Naive thymus-derived CD8-positive, alpha-beta T cell (primary cell): ENCODE measurements at regions of chr21 and their contacts with region 1.

Region 1: GRCh38 chr21:29449306-29449950 is 150.7 kb downstream of the BACH1 start:
- DNase-seq: peak in 7 of 10 donors; percentile 15 to 88 (median 38)
- ATAC-seq: peak; percentile 90 to 94
- H3K4me3 Mint-ChIP-seq: peak overlapping the region; percentile 32 to 78 (median 74)
- H3K27ac Mint-ChIP-seq: peak overlapping the region; percentile 43 to 98 (median 96)
- H3K4me1 Mint-ChIP-seq: peaks cover 13 to 30% (median 27%) of the 10 kb centered on the region in 4 donors
- H3K27me3 Mint-ChIP-seq: no peaks in the 10 kb centered on the region

Region 2: GRCh38 chr21:29436143-29436542 is 13.3 kb before region 1 on chr21:
- POLR2A ChIA-PET with region 1: interaction called, 20 read pairs
- DNase-seq: peak; percentile 11 to 77 (median 40)
- ATAC-seq: peak; percentile 94 to 95
- H3K4me3 Mint-ChIP-seq: peak overlapping the region; percentile 79 to 93 (median 87)
- H3K27ac Mint-ChIP-seq: peak overlapping the region; percentile 86 to 96 (median 92)
- H3K4me1 Mint-ChIP-seq: peaks cover 11 to 29% (median 26%) of the 10 kb centered on the region in 4 donors
- H3K27me3 Mint-ChIP-seq: no peaks in the 10 kb centered on the region

Region 3: DNA sequence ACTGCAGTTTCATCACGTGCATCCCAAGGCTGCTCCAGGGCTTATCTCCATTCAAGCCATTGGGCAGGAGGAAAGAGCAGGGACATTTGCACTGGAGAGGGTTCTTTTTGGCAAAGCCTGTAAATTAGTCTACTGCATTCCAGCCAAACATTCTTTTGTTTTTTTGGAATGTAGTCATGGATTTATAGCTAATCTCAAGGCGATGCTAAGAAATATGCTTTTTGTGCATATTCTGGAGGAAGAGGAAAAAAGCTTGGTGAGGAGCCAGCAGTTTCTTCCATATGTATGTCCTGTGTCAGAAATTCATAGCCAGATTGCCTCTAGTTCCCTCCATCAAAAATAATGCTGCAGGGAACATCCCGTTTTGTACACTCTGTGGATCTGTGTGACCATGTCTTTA is 70.7 kb after region 1 on chr21:
- POLR2A ChIA-PET with region 1: no interaction called
- DNase-seq: no peak
- ATAC-seq: no peak
- H3K4me3 Mint-ChIP-seq: no peak overlapping the region
- H3K27ac Mint-ChIP-seq: no peak overlapping the region
- H3K4me1 Mint-ChIP-seq: no peaks in the 10 kb centered on the region
- H3K27me3 Mint-ChIP-seq: no peaks in the 10 kb centered on the region